Stomach (tissue), 19 donors: ENCODE measurements at regions of chr1 and their contacts with region 1.

Region 1: DNA sequence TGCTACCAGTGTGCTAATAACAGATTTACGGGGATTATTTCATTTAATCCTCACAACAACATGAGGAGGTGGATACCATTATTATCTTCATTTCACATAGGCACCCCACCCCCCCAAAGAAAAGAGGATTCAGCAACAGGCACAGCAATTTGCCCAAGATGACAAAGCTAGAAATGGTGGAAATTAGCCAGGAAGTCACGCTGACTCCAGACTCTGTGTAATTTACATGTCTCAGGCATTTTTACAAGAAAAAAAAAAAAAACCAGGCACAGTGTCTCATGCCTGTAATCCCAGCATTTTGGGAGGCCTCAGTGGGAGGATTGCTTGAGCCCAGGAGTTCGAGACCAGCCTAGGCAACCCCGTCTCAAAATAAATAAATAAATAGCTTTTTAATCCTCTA is 37.5 kb upstream of the PRDM2 start:
- DNase-seq: peak in 1 of 2 donors; percentile 39
- H3K4me3 ChIP-seq: no peak overlapping the region
- H3K27ac ChIP-seq: peak overlapping the region in 4 of 5 donors; percentile 51 to 64 (median 58)
- H3K4me1 ChIP-seq: peaks cover 0 to 5% (median 1%) of the 10 kb centered on the region in 4 donors
- H3K27me3 ChIP-seq: no peaks in the 10 kb centered on the region
- CTCF ChIP-seq: no peak
- EP300 ChIP-seq: no peak
- POLR2A ChIP-seq: no peak

Region 2: GRCh38 chr1:13807213-13807612 is 144.7 kb after region 1 on chr1:
- intact Hi-C with region 1: loop called (anchors 10 kb)
- DNase-seq: peak; percentile 63 to 65
- H3K4me3 ChIP-seq: no peak overlapping the region
- H3K27ac ChIP-seq: no peak overlapping the region
- H3K4me1 ChIP-seq: peaks cover 0 to 6% (median under 1%) of the 10 kb centered on the region in 4 donors
- H3K27me3 ChIP-seq: no peaks in the 10 kb centered on the region
- CTCF ChIP-seq: peak in 2 of 7 experiments; percentile 12 to 24
- EP300 ChIP-seq: no peak
- POLR2A ChIP-seq: no peak

Region 3: GRCh38 chr1:13832580-13832979 is 170.1 kb after region 1 on chr1:
- intact Hi-C with region 1: no loop called
- DNase-seq: no peak
- H3K4me3 ChIP-seq: no peak overlapping the region
- H3K27ac ChIP-seq: no peak overlapping the region
- H3K4me1 ChIP-seq: peaks cover 0 to 22% (median 9%) of the 10 kb centered on the region in 4 donors
- H3K27me3 ChIP-seq: peaks cover 0 to 6% (median 0%) of the 10 kb centered on the region in 3 donors
- CTCF ChIP-seq: no peak
- EP300 ChIP-seq: no peak
- POLR2A ChIP-seq: no peak

Region 4: DNA sequence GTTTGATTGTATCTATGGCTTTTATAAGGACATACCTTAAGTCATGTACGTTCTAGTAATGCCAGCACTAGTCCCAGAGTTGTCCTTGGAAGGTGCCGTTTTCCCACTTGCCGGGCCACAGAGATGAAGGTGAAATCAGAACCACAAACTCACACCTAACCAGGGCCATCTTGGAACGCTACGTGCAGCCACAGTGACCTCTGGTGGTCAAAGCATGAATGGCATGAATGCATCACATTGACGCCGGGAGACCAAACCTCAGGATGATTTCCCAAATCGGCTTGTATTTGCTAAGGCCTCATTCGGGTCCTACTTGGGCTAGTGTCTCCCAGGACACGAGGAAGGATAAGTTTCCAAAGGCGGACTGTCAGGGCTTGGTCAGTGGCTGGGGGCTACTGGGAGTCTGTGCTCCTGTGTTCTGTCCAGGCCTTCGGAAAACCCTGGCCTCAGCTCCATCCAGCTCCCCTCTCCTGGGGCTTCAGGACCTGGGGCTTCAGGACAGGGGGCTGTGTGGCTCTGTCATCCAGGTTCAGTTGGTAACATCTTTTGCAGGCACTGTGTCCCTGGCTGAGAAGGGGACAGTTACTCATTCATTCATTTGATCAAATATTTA is 298.0 kb after region 1 on chr1:
- intact Hi-C with region 1: loop called (anchors 5 kb)
- DNase-seq: peak; percentile 74 to 86
- H3K4me3 ChIP-seq: no peak overlapping the region
- H3K27ac ChIP-seq: no peak overlapping the region
- H3K4me1 ChIP-seq: no peaks in the 10 kb centered on the region
- H3K27me3 ChIP-seq: peaks cover 0 to 11% (median 0%) of the 10 kb centered on the region in 3 donors
- CTCF ChIP-seq: peak in 6 of 7 experiments; percentile 51 to 97 (median 93)
- EP300 ChIP-seq: no peak
- POLR2A ChIP-seq: no peak

Region 5: DNA sequence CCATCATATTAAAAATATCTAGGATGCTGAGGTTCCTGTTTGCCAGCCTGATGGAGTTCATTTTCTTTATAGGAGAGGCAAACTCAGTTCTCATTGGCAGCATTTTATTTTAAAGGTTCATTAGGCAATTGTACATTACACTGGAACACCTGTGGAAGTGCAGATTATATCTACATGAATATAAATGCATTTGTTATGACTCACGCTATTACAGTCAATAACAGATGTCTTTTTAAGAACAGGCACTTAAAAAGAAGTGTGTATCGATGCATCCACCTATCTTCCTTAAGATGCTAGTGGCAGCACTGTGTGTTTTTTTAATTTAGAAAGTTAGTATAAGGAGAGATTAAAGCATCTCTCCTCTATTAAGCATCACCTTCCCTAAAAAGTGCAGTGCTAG is 314.0 kb after region 1 on chr1:
- intact Hi-C with region 1: no loop called
- DNase-seq: no peak
- H3K4me3 ChIP-seq: no peak overlapping the region
- H3K27ac ChIP-seq: no peak overlapping the region
- H3K4me1 ChIP-seq: no peaks in the 10 kb centered on the region
- H3K27me3 ChIP-seq: no peaks in the 10 kb centered on the region
- CTCF ChIP-seq: no peak
- EP300 ChIP-seq: no peak
- POLR2A ChIP-seq: no peak